MCF 10A (cell line): ENCODE measurements at regions of chr12 and their contacts with region 1.

Region 1: GRCh38 chr12:65169320-65170208 is at the start of gene LEMD3:
- DNase-seq: peak; percentile 96
- H3K4me3 Mint-ChIP-seq: peak within 1 kb of the TSS; percentile 100
- H3K27ac Mint-ChIP-seq: peak within 1 kb of the TSS; percentile 98
- H3K4me1 Mint-ChIP-seq: peaks cover 11% of the 10 kb centered on the region
- H3K27me3 Mint-ChIP-seq: no peaks in the 10 kb centered on the region
- CTCF ChIP-seq: no peak
- total RNA-seq, gene LEMD3: 21.8 and 27.7 TPM in 2 replicates

Region 2: GRCh38 chr12:64931981-64932380 is 237.6 kb before region 1 on chr12:
- CTCF ChIA-PET with region 1: no interaction called
- POLR2A ChIA-PET with region 1: no interaction called
- intact Hi-C with region 1: no loop called
- DNase-seq: no peak
- H3K4me3 Mint-ChIP-seq: no peak overlapping the region
- H3K27ac Mint-ChIP-seq: no peak overlapping the region
- H3K4me1 Mint-ChIP-seq: no peaks in the 10 kb centered on the region
- H3K27me3 Mint-ChIP-seq: peaks cover 27% of the 10 kb centered on the region
- CTCF ChIP-seq: no peak

Region 3: DNA sequence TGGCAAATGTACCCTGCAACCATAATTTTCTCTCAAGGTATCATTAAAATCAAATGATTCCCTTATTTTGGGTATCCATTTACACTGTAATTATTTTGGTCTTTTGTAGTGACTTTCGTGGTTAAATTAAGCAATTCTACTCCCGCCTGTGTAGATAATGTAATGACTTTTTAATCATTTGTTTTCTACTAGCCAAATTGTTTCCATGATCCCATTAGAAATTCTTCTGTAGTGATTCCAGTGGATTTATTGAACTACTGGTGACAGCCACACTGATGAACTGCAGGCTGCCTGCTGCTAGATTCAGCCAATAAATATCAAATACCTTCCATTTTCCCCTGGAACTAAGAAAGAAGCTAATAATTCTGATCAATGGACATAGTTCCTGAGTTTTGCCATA is 144.4 kb before region 1 on chr12:
- CTCF ChIA-PET with region 1: no interaction called
- POLR2A ChIA-PET with region 1: no interaction called
- intact Hi-C with region 1: no loop called
- DNase-seq: no peak
- H3K4me3 Mint-ChIP-seq: no peak overlapping the region
- H3K27ac Mint-ChIP-seq: no peak overlapping the region
- H3K4me1 Mint-ChIP-seq: no peaks in the 10 kb centered on the region
- H3K27me3 Mint-ChIP-seq: peaks cover 86% of the 10 kb centered on the region
- CTCF ChIP-seq: no peak

Region 4: GRCh38 chr12:65067383-65067782 is 102.2 kb before region 1 on chr12:
- CTCF ChIA-PET with region 1: no interaction called
- POLR2A ChIA-PET with region 1: no interaction called
- intact Hi-C with region 1: no loop called
- DNase-seq: no peak
- H3K4me3 Mint-ChIP-seq: no peak overlapping the region
- H3K27ac Mint-ChIP-seq: no peak overlapping the region
- H3K4me1 Mint-ChIP-seq: no peaks in the 10 kb centered on the region
- H3K27me3 Mint-ChIP-seq: peaks cover 69% of the 10 kb centered on the region
- CTCF ChIP-seq: no peak

Region 5: GRCh38 chr12:65182012-65182739 is 12.6 kb after region 1 on chr12:
- CTCF ChIA-PET with region 1: interaction called, 6 read pairs
- POLR2A ChIA-PET with region 1: interaction called, 49 read pairs
- intact Hi-C with region 1: no loop called
- DNase-seq: no peak
- H3K4me3 Mint-ChIP-seq: no peak overlapping the region
- H3K27ac Mint-ChIP-seq: no peak overlapping the region
- H3K4me1 Mint-ChIP-seq: peaks cover 14% of the 10 kb centered on the region
- H3K27me3 Mint-ChIP-seq: no peaks in the 10 kb centered on the region
- CTCF ChIP-seq: no peak

Region 6: GRCh38 chr12:65195387-65196055 is 26.0 kb after region 1 on chr12:
- CTCF ChIA-PET with region 1: interaction called, 3 read pairs
- POLR2A ChIA-PET with region 1: interaction called, 17 read pairs
- intact Hi-C with region 1: no loop called
- DNase-seq: no peak
- H3K4me3 Mint-ChIP-seq: no peak overlapping the region
- H3K27ac Mint-ChIP-seq: no peak overlapping the region
- H3K4me1 Mint-ChIP-seq: peaks cover 6% of the 10 kb centered on the region
- H3K27me3 Mint-ChIP-seq: no peaks in the 10 kb centered on the region
- CTCF ChIP-seq: no peak

Region 7: DNA sequence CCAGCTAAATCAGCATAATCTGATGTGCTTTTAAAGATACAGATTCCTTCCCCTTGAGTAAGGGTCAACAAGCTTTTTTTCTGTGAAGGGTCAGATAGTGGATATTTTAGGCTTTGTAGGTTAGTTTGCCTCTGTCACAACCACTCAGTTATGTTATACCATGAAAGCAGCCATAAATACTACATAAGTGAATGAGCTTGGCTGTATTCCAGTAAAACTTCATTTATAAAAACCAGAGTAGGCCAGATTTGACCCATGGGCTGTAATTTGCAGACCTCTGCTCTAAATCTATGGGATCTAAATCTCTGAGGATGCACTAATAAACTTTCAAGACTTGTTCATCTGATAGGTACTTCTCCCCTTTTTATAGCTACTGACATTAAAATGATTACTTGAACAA is 47.5 kb after region 1 on chr12:
- CTCF ChIA-PET with region 1: no interaction called
- POLR2A ChIA-PET with region 1: interaction called, 22 read pairs
- intact Hi-C with region 1: no loop called
- DNase-seq: no peak
- H3K4me3 Mint-ChIP-seq: no peak overlapping the region
- H3K27ac Mint-ChIP-seq: no peak overlapping the region
- H3K4me1 Mint-ChIP-seq: no peaks in the 10 kb centered on the region
- H3K27me3 Mint-ChIP-seq: no peaks in the 10 kb centered on the region
- CTCF ChIP-seq: no peak

Region 8: GRCh38 chr12:65278576-65279368 is 109.2 kb after region 1 on chr12 and contains the start of gene MSRB3:
- CTCF ChIA-PET with region 1: interaction called, 5 read pairs
- POLR2A ChIA-PET with region 1: interaction called, 6 read pairs
- intact Hi-C with region 1: loop called (anchors 5 kb)
- DNase-seq: peak; percentile 66
- H3K4me3 Mint-ChIP-seq: peak within 1 kb of the TSS; percentile 66
- H3K27ac Mint-ChIP-seq: peak within 1 kb of the TSS; percentile 13
- H3K4me1 Mint-ChIP-seq: peaks cover 16% of the 10 kb centered on the region
- H3K27me3 Mint-ChIP-seq: no peaks in the 10 kb centered on the region
- CTCF ChIP-seq: peak; percentile 24
- total RNA-seq, gene MSRB3: 31.1 and 35.1 TPM in 2 replicates